Posterior vena cava (tissue), 2 donors: ENCODE measurements at regions of chr9 and their contacts with region 1.

Region 1: DNA sequence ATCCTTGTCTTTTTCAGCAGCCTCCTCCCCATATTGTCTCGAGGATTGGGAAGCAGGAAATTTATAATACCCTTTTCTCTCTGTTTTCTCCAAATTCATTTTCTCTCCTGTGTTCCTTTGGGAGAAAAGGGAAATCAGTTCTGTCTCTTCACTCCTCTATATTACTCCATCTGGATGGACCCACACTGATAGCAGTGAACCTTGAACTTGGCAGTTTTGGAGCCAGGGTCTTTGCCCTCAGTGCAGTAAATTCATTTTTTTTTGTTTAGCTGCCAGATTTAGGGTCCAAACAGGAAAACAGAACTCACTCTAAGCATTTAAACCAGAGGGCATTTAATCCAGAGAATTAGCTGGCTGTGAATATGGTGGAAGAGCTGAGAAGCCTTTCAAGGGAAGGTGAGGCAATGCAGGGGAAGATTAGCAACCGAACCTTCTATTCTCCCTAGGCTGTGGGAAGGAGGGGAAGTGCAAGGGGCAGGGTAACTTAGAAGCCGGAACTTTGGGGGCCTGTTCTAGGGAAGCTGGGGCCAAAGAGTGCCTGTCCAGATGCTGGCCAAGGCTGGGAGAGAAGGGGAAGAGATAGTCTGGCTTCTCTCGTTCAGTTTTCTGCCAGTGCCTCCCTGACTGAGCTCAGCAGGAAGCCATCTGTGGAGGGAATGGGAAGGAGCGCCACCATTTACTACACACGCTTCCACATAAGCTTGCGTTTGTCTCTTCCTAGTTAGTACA is 16.3 kb upstream of the NPR2 start:
- DNase-seq: no peak

Region 2: GRCh38 chr9:35760651-35761050 is 14.4 kb before region 1 on chr9:
- intact Hi-C with region 1: loop called in 1 of 2 experiments (anchors 1 kb)
- DNase-seq: no peak

Region 3: DNA sequence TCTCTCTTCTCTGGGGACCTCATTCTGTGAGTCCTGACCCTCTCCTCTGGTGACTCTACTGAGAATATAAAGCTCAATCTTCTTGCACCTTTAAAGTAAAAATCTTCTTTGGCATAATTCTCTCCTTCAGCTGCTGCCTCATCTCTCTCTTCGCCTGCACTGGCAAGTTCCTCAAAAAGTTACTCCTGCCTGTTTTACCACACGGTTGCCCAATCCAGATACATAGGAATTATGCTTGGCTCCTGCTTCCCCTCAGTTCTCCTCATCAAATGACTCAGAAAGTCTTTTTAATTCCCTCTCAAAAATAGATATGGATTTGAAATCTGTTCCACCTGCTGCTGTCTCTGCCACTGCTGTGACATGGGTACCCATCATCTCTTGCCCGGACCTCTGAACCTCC is 116.6 kb after region 1 on chr9:
- intact Hi-C with region 1: loop called in 1 of 2 experiments (anchors 5 kb)
- DNase-seq: no peak

Region 4: DNA sequence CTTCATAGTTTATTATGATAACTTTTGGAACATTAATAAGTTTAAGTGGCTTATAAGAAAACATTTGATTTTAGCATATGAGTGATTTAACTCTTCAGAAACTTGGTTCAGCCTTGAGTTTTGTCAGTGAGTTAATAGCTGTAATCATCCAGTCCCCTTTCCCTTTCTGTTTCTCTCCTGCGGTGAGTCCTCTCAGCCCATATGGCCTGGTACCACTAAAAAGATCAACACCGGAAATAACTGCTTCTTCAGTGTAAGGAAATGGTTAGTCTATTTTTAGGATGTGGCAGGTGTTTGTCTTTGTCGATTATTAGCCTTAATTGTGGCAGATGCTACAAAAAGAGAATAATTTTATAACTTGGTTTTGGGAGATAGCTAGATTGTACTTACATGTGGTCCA is 1527.2 kb after region 1 on chr9:
- intact Hi-C with region 1: no loop called
- DNase-seq: no peak